CD14-positive monocyte (primary cell): ENCODE measurements at regions of chr2 and their contacts with region 1.

Region 1: GRCh38 chr2:200864176-200864976 is at the start of gene CLK1:
- DNase-seq: peak; percentile 93 to 97 (median 96)
- H3K4me3 ChIP-seq: peak within 1 kb of the TSS; percentile 79 to 88 (median 86)
- H3K4me3 Mint-ChIP-seq: peak within 1 kb of the TSS; percentile 89 to 97
- H3K27ac ChIP-seq: peak within 1 kb of the TSS; percentile 100
- H3K27ac Mint-ChIP-seq: peak within 1 kb of the TSS; percentile 98 to 100 (median 100)
- H3K4me1 ChIP-seq: peaks cover 40 to 59% of the 10 kb centered on the region in 2 donors
- H3K4me1 Mint-ChIP-seq: peaks cover 48% of the 10 kb centered on the region
- H3K27me3 ChIP-seq: no peaks in the 10 kb centered on the region
- H3K27me3 Mint-ChIP-seq: no peaks in the 10 kb centered on the region
- CTCF ChIP-seq: no peak
- polyA plus RNA-seq, gene CLK1: 7.5 to 383 (median 8.2) TPM

Region 2: DNA sequence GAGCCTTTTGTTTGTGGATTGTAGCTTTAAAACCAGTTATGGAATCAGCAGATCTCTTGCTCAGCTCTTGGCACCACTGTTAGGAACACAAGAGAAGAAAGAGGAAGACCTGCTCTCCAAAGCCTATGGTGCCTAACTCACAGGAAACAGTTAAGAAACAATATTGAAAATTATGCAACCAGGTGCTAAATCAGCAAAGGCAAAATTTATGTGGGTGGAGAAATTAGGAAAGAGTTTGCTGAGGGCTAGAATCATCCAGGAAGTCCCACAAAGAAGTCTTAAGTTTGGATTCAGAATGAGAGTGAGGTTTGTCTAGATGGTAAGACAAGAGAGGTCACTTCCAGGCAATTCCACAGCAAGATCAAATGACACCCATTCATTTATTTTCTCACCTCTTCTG is 229.1 kb before region 1 on chr2:
- intact Hi-C with region 1: loop called in 1 of 2 experiments (anchors 10 kb)
- DNase-seq: peak; percentile 67 to 82 (median 77)
- H3K4me3 ChIP-seq: peak overlapping the region in 1 of 3 experiments; percentile 49
- H3K4me3 Mint-ChIP-seq: peak overlapping the region; percentile 6 to 68
- H3K27ac ChIP-seq: peak overlapping the region; percentile 44 to 75
- H3K27ac Mint-ChIP-seq: peak overlapping the region; percentile 60 to 91 (median 87)
- H3K4me1 ChIP-seq: peaks cover 21 to 32% of the 10 kb centered on the region in 2 donors
- H3K4me1 Mint-ChIP-seq: peaks cover 29% of the 10 kb centered on the region
- H3K27me3 ChIP-seq: no peaks in the 10 kb centered on the region
- H3K27me3 Mint-ChIP-seq: no peaks in the 10 kb centered on the region
- CTCF ChIP-seq: no peak

Region 3: DNA sequence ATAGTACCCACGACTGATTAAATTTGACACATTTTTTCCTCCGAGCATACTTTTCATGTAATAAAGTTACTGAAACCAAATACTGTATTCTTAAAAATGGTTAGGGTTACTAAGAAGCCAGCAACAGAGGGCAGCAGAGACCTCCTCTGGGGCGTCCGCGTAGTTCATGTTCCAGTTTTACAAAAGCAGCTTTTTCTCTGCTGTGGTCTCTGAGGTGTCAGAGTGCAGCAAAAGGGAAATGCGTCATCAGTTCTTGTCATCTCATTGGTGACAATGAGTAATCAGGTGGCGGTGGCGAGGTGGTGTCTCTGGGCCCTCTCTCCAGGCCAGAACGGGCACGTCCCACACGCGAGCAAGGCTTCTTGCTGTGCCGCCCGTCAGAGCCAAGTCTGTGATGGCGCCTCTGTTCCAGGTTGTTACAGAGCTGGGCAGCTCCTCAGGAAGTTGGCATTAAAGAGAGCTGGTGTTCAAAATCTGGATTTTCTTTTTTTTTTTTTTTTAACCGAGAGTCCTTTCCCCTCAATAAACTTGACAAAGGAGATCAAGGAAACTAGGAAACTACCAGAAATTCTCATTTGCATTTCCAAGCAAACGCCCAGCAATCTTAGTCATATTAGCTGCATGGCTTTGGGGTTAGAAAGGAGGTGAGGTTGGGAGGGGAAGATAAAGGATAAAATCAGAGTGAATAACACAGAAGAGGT is 151.2 kb before region 1 on chr2:
- intact Hi-C with region 1: loop called in 1 of 2 experiments (anchors 5 kb)
- DNase-seq: peak; percentile 97 to 100 (median 98)
- H3K4me3 ChIP-seq: peak overlapping the region; percentile 3 to 58 (median 15)
- H3K4me3 Mint-ChIP-seq: peak overlapping the region; percentile 74 to 86
- H3K27ac ChIP-seq: peak overlapping the region; percentile 57 to 90
- H3K27ac Mint-ChIP-seq: peak overlapping the region; percentile 91 to 98 (median 96)
- H3K4me1 ChIP-seq: peaks cover 5 to 7% of the 10 kb centered on the region in 2 donors
- H3K4me1 Mint-ChIP-seq: peaks cover 9% of the 10 kb centered on the region
- H3K27me3 ChIP-seq: no peaks in the 10 kb centered on the region
- H3K27me3 Mint-ChIP-seq: peaks cover 0 to 3% (median 0%) of the 10 kb centered on the region in 3 donors
- CTCF ChIP-seq: peak; percentile 84

Region 4: DNA sequence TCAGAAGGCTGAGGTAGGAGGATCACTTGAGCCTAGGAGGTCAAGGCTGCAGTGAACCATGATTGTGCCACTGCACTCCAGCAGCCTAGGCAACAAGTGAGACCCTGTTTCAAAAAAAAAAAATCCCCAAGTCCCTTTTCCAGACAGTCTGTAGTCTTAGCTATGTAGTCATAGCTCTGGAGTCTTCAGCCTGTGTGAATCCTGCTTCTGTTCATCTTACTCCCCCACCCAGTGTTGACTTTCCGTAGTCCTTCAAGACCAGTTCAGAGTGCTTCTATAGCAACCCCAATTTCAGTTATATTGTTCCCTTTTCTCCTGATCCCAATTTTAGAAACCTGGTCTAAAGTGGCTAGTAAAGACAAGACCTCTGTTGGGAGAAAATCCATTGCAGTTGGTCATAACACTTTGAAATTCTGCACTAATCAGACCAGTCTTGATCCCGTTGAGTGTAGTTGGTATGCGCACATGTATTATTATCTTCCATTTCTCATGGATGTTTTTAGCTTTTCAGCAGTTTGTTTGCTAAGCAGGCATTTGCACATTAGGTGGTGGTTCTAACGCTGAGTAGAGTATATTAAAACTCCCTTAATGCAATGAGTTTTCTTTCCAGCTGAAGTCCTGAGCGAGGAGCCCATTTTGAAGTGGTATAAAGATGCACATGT is 43.7 kb before region 1 on chr2:
- intact Hi-C with region 1: no loop called
- DNase-seq: no peak
- H3K4me3 ChIP-seq: no peak overlapping the region
- H3K4me3 Mint-ChIP-seq: no peak overlapping the region
- H3K27ac ChIP-seq: peak overlapping the region in 1 of 2 donors; percentile 6
- H3K27ac Mint-ChIP-seq: peak overlapping the region in 1 of 7 donors; percentile 23
- H3K4me1 ChIP-seq: no peaks in the 10 kb centered on the region
- H3K4me1 Mint-ChIP-seq: peaks cover 2% of the 10 kb centered on the region
- H3K27me3 ChIP-seq: no peaks in the 10 kb centered on the region
- H3K27me3 Mint-ChIP-seq: no peaks in the 10 kb centered on the region
- CTCF ChIP-seq: no peak

Region 5: DNA sequence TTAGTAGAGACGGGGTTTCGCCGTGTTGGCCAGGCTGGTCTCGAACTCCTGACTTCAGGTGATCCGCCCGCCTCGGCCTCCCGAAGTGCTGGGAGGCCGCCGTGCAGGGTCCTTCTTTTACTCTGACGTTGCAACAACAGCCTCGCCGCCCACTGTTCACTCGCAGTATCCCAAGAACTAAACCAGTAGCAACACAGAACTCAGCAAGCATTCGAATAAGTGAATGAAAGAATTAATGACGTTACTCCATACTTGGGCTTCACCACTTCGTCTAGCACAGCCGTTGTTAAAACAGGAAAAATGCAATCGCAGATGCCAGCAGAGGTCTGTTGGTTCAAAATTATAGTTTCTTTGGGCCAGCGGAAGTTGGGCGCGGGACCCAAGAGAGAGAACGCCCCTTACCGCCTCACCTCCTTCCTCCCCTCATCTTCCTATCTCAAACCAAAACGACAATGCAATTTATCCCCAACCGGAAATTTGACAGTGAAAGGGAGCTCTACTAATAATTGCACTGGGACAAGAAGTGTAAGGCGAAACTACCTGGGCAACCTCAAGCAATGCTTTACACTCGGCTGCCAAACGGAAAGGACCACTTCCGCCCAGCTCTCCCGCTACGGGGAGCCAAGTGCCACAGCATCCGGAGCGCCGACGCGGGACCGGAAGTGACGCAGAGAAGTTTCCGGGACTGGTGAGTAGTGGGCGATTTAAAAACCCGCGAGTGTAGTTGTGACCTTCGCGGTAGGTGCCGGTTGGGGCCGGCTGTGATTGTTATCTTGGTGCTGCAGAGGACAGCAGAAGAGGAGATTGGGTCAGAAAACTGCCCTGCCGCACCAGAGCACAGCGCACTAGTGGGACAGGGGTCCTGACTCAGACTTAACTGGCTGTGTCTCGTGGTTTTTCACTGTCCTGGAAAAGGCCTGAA is 24.6 kb after region 1 on chr2 and contains the starts of genes NIF3L1 and PPIL3:
- intact Hi-C with region 1: loop called in 1 of 2 experiments (anchors 2 kb)
- DNase-seq: peak; percentile 97 to 98 (median 97)
- H3K4me3 ChIP-seq: peak within 1 kb of the TSS; percentile 84 to 96 (median 89)
- H3K4me3 Mint-ChIP-seq: peak within 1 kb of the TSS; percentile 94 to 96
- H3K27ac ChIP-seq: peak within 1 kb of the TSS; percentile 96 to 98
- H3K27ac Mint-ChIP-seq: peak within 1 kb of the TSS; percentile 94 to 100 (median 99)
- H3K4me1 ChIP-seq: peaks cover 16 to 30% of the 10 kb centered on the region in 2 donors
- H3K4me1 Mint-ChIP-seq: peaks cover 29% of the 10 kb centered on the region
- H3K27me3 ChIP-seq: no peaks in the 10 kb centered on the region
- H3K27me3 Mint-ChIP-seq: peaks cover 0 to 1% (median 0%) of the 10 kb centered on the region in 3 donors
- CTCF ChIP-seq: no peak
- polyA plus RNA-seq, gene NIF3L1: 16.2 to 18.0 (median 16.9) TPM
- polyA plus RNA-seq, gene PPIL3: 12.3 to 34.6 (median 20.4) TPM